Endothelial cell of umbilical vein (primary cell): ENCODE measurements at regions of chr4 and their contacts with region 1.

Region 1: GRCh38 chr4:106369456-106370060 is 980 bp upstream of the GIMD1 start:
- DNase-seq: peak; percentile 85
- H3K4me3 ChIP-seq: no peak overlapping the region
- H3K27ac ChIP-seq: no peak overlapping the region
- H3K4me1 ChIP-seq: peaks cover 19% of the 10 kb centered on the region
- H3K27me3 ChIP-seq: no peaks in the 10 kb centered on the region
- CTCF ChIP-seq: peak; percentile 58 to 60
- POLR2A ChIP-seq: no peak

Region 2: GRCh38 chr4:106021737-106022410 is 347.7 kb before region 1 on chr4:
- CTCF ChIA-PET with region 1: no interaction called
- POLR2A ChIA-PET with region 1: no interaction called
- dilution Hi-C with region 1: no loop called
- intact Hi-C with region 1: no loop called
- DNase-seq: no peak
- H3K4me3 ChIP-seq: no peak overlapping the region
- H3K27ac ChIP-seq: no peak overlapping the region
- H3K4me1 ChIP-seq: no peaks in the 10 kb centered on the region
- H3K27me3 ChIP-seq: no peaks in the 10 kb centered on the region
- CTCF ChIP-seq: no peak
- POLR2A ChIP-seq: no peak

Region 3: DNA sequence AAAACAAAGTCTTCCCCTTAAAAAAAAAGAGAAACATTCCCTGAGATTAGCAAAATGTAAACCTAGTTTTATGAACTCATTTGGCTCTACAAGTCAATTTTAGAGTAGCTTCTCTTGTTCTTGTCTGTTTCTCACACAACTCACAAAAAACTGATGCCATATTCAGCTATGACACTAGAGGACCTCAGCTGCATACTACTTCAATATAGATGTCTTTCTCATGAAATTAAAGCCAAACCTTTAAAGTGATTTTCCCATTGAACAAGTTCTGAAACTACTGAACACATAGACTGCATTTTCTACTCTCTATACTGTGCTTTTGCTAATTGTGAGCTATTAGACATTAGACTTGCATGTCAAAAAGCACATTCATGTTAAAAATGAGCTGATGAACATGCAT is 103.4 kb before region 1 on chr4:
- CTCF ChIA-PET with region 1: interaction called, 34 read pairs
- POLR2A ChIA-PET with region 1: no interaction called
- dilution Hi-C with region 1: no loop called
- intact Hi-C with region 1: loop called (anchors 1 kb)
- DNase-seq: peak; percentile 72
- H3K4me3 ChIP-seq: no peak overlapping the region
- H3K27ac ChIP-seq: no peak overlapping the region
- H3K4me1 ChIP-seq: peaks cover 6% of the 10 kb centered on the region
- H3K27me3 ChIP-seq: no peaks in the 10 kb centered on the region
- CTCF ChIP-seq: peak; percentile 36 to 40
- POLR2A ChIP-seq: no peak

Region 4: GRCh38 chr4:106355193-106355592 is 14.4 kb before region 1 on chr4:
- CTCF ChIA-PET with region 1: interaction called, 12 read pairs
- POLR2A ChIA-PET with region 1: no interaction called
- dilution Hi-C with region 1: no loop called
- intact Hi-C with region 1: no loop called
- DNase-seq: no peak
- H3K4me3 ChIP-seq: no peak overlapping the region
- H3K27ac ChIP-seq: no peak overlapping the region
- H3K4me1 ChIP-seq: no peaks in the 10 kb centered on the region
- H3K27me3 ChIP-seq: no peaks in the 10 kb centered on the region
- CTCF ChIP-seq: no peak
- POLR2A ChIP-seq: no peak

Region 5: GRCh38 chr4:106583567-106583966 is 214.0 kb after region 1 on chr4:
- CTCF ChIA-PET with region 1: interaction called, 6 read pairs
- POLR2A ChIA-PET with region 1: no interaction called
- dilution Hi-C with region 1: no loop called
- intact Hi-C with region 1: loop called (anchors 2 kb)
- DNase-seq: peak; percentile 91
- H3K4me3 ChIP-seq: no peak overlapping the region
- H3K27ac ChIP-seq: peak overlapping the region; percentile 96
- H3K4me1 ChIP-seq: peaks cover 56% of the 10 kb centered on the region
- H3K27me3 ChIP-seq: no peaks in the 10 kb centered on the region
- CTCF ChIP-seq: no peak
- POLR2A ChIP-seq: no peak

Region 6: DNA sequence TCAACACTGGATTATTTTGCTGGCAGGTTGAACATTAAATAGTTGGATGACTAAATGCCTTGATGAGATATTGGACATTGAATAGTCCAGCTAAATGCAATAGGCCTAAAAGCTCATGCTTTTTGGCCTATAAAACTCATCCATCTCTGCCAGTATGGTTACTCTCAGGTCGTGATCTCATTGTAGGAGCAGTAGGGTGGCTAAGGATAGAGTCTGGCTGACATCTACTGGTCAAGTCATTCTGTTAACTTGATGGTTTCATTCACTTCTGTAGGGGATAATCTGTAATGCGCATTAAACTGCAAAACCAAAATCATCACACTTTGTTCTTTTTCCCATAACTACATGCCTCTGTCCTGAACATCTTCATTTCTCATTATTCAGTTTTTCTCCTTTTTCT is 439.5 kb after region 1 on chr4:
- CTCF ChIA-PET with region 1: interaction called, 89 read pairs
- POLR2A ChIA-PET with region 1: no interaction called
- dilution Hi-C with region 1: no loop called
- intact Hi-C with region 1: loop called (anchors 1 kb)
- DNase-seq: peak; percentile 66
- H3K4me3 ChIP-seq: no peak overlapping the region
- H3K27ac ChIP-seq: no peak overlapping the region
- H3K4me1 ChIP-seq: no peaks in the 10 kb centered on the region
- H3K27me3 ChIP-seq: no peaks in the 10 kb centered on the region
- CTCF ChIP-seq: peak; percentile 27 to 30
- POLR2A ChIP-seq: no peak

Region 7: GRCh38 chr4:107037199-107037584 is 667.6 kb after region 1 on chr4:
- CTCF ChIA-PET with region 1: no interaction called
- POLR2A ChIA-PET with region 1: no interaction called
- dilution Hi-C with region 1: no loop called
- intact Hi-C with region 1: loop called (anchors 1 kb)
- DNase-seq: peak; percentile 43
- H3K4me3 ChIP-seq: peak overlapping the region in 1 of 3 experiments; percentile 84
- H3K27ac ChIP-seq: no peak overlapping the region
- H3K4me1 ChIP-seq: peaks cover 34% of the 10 kb centered on the region
- H3K27me3 ChIP-seq: peaks cover 17 to 19% of the 10 kb centered on the region in 2 experiments
- CTCF ChIP-seq: peak; percentile 65 to 77
- POLR2A ChIP-seq: no peak